ENCODE measurements at regions of chr22 and their contacts with region 1.

Region 1: GRCh38 chr22:18077639-18078328 is at the start of gene PEX26:
- DNase-seq: peak; percentile 86
- H3K4me3 ChIP-seq: peak within 1 kb of the TSS; percentile 100
- H3K27ac ChIP-seq: peak within 1 kb of the TSS; percentile 57
- H3K27me3 ChIP-seq: no peaks in the 10 kb centered on the region
- CTCF ChIP-seq: no peak
- polyA plus RNA-seq, gene PEX26: 20.8 and 24.8 TPM in 2 replicates

Region 2: GRCh38 chr22:17559188-17559587 is 518.6 kb before region 1 on chr22:
- CTCF ChIA-PET with region 1: interaction called, 11 read pairs
- POLR2A ChIA-PET with region 1: no interaction called
- DNase-seq: no peak
- H3K4me3 ChIP-seq: no peak overlapping the region
- H3K27ac ChIP-seq: no peak overlapping the region
- H3K27me3 ChIP-seq: peaks cover 13% of the 10 kb centered on the region
- CTCF ChIP-seq: no peak

Region 3: GRCh38 chr22:17846326-17846992 is 231.3 kb before region 1 on chr22:
- CTCF ChIA-PET with region 1: interaction called, 10 read pairs
- POLR2A ChIA-PET with region 1: no interaction called
- DNase-seq: no peak
- H3K4me3 ChIP-seq: no peak overlapping the region
- H3K27ac ChIP-seq: no peak overlapping the region
- H3K27me3 ChIP-seq: no peaks in the 10 kb centered on the region
- CTCF ChIP-seq: no peak

Region 4: GRCh38 chr22:17903564-17904295 is 174.1 kb before region 1 on chr22:
- CTCF ChIA-PET with region 1: interaction called, 43 read pairs
- POLR2A ChIA-PET with region 1: no interaction called
- DNase-seq: no peak
- H3K4me3 ChIP-seq: no peak overlapping the region
- H3K27ac ChIP-seq: no peak overlapping the region
- H3K27me3 ChIP-seq: no peaks in the 10 kb centered on the region
- CTCF ChIP-seq: no peak

Region 5: GRCh38 chr22:18001040-18001893 is 76.5 kb before region 1 on chr22:
- CTCF ChIA-PET with region 1: interaction called, 36 read pairs
- POLR2A ChIA-PET with region 1: no interaction called
- DNase-seq: peak; percentile 97
- H3K4me3 ChIP-seq: peak overlapping the region; percentile 66
- H3K27ac ChIP-seq: peak overlapping the region; percentile 98
- H3K27me3 ChIP-seq: no peaks in the 10 kb centered on the region
- CTCF ChIP-seq: peak; percentile 44

Region 6: DNA sequence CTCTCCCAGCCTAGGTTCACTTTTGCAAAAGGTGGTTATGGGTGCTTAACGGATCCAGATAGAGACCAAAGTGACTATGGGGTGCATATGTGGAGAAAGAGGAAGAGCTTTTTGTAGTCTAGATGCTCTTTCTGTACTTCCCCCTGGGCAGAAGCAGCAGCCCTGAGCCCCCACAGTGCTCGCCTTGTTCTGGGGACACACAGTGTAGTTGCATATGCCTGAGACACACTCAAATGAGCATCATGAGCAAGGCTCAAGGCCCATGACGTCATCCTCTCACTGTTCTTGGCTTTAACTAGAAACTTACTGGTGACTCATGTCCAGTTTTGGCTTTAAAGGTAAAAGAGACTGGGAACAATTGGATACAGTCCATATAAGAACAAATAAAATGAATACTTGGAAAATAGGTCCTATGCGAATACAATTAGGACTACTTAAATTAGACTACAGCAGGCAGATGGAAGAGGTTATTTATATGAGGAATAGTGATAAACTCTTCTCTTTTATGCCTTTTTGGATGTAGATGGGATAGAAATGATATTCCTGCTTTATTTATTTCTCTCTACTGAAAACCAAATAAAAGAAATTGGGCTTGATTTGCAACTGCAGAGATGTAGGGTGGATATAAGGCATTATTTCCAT is 20.1 kb before region 1 on chr22:
- CTCF ChIA-PET with region 1: interaction called, 26 read pairs
- POLR2A ChIA-PET with region 1: no interaction called
- DNase-seq: peak; percentile 95
- H3K4me3 ChIP-seq: no peak overlapping the region
- H3K27ac ChIP-seq: peak overlapping the region; percentile 77
- H3K27me3 ChIP-seq: no peaks in the 10 kb centered on the region
- CTCF ChIP-seq: no peak

Measured in AG04450 (cell line).